Right ventricle myocardium superior (tissue), 1 donor: ENCODE measurements at regions of chr9 and their contacts with region 1.

Region 1: GRCh38 chr9:97468658-97469448 is 32.6 kb upstream of the TMOD1 start:
- DNase-seq: peak; percentile 73
- ATAC-seq: peak; percentile 97

Region 2: DNA sequence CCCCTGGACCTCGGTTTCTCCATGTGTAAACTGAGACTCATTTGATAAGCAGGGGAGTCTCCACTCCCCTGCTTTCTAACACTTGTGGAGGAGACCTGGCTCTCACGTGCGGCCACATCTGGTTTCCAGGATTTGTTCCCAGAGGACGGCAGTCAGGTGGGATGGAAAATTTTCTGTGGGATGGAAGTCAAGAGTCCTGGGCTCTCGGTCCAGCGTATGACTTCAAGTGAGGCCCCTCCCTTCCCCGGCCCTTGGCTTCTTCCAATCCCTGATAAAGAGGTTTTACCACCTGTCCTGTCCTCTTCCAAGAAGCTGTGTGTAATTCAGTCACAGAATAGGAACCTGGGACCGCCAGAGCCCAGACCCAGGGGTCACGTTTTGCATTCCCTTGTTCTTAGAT is 67.6 kb after region 1 on chr9:
- intact Hi-C with region 1: no loop called
- DNase-seq: no peak
- ATAC-seq: peak; percentile 28

Region 3: GRCh38 chr9:97570899-97571298 is 102.0 kb after region 1 on chr9:
- intact Hi-C with region 1: no loop called
- DNase-seq: peak; percentile 90
- ATAC-seq: peak; percentile 93

Region 4: DNA sequence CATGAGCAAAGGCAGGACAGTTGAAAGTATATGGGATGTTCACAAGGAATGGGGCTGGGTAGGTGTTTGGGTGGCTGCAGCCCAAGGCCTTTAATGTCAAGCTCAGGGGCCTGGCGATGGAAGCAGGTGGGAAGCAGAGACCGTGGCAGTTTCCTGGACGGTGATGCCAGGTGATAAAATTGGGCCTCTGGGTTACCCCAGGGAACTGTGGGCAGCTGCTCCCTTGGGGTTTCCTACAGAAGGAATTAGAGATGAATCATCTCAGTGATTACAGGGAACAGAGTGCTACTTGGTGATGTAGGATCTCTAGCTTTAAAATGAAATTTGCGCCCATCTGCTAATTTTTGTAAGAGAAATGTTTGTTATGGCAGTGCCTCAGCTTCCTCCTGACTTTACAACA is 125.1 kb after region 1 on chr9:
- intact Hi-C with region 1: no loop called
- DNase-seq: no peak
- ATAC-seq: no peak

Region 5: DNA sequence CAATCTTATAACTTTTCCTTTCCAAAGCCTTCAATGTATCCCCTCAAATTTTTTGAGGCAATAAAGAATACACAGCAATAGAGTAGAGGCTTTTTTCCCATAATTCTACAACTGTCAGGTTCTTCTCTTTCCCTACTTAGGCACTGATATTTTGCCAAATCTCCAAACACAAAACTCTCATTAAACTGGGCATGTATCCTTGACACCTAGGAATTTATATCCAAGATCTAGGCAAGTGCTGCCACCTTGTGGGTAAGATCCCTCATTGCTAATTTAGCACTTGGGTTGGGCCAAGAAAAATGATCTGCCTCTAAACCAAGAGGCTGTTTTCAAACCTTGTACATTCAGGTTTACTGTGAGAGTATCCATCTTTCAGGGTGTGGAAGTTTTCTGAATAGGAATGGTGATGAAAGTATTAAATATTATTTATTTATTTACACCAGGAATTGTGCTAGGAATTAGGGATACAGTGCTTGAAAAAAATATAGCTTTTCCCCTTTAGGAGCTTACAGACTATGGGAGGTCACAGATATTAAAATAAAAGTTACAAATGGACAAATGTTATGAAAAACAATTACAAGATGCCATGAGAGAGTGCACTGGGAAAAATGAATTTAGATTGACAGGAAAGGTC is 146.7 kb after region 1 on chr9:
- intact Hi-C with region 1: loop called (anchors 5 kb)
- DNase-seq: no peak
- ATAC-seq: peak; percentile 84